PC-3 (cell line): ENCODE measurements at regions of chr3 and their contacts with region 1.

Region 1: GRCh38 chr3:99023590-99024192 is 122.2 kb upstream of the DCBLD2 start:
- DNase-seq: peak; percentile 73
- ATAC-seq: no peak; the same call in 1 of the 2 replicates
- H3K4me3 ChIP-seq: no peak overlapping the region
- H3K27ac ChIP-seq: no peak overlapping the region
- H3K4me1 ChIP-seq: no peaks in the 10 kb centered on the region
- H3K27me3 ChIP-seq: no peaks in the 10 kb centered on the region
- CTCF ChIP-seq: peak; percentile 91

Region 2: DNA sequence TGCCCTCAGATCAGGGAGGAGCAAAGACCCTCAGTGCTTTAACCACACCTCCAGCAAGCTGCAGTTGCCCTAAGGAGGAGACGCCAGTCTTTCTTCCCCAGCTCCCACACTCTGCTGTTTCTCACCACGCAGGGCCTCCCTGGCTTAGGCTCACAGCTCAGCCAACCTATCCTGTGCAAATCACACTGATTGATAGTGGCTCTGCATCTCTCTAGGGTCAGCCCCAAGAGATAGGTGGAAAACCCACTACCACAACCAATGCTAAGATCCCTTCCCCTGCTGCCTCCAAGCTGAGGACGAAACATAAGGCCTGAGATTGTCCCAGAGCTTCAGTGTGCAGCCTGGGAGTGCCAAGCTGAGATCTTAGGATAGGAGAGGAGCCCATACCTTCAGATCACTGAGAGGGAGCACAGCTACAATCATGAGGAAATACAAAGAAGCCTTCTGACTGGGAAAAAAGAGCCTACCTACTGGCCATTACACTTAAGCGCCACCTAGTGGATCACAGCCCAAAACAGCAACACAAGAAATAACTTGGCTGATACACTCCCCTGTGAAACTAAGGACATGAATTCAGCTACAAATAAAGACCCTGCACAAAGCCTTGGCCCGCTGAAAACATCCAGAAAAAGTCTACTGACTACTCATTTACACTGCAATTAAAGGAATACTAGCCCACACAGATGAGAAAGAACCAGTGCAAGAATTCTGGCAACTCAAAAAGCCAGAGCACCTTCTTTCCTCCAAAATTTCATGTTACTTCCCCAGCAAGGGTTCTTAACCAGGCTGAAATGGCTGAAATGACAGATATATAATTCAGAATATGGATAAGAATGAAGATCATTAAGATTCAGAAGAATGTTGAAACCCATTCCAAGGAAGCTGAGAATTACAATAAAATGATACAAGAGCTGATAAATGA is 149.3 kb after region 1 on chr3:
- CTCF ChIA-PET with region 1: interaction called, 22 read pairs
- POLR2A ChIA-PET with region 1: interaction called, 3 read pairs
- intact Hi-C with region 1: loop called (anchors 1 kb)
- DNase-seq: peak; percentile 84
- ATAC-seq: peak; percentile 79
- H3K4me3 ChIP-seq: no peak overlapping the region
- H3K27ac ChIP-seq: no peak overlapping the region
- H3K4me1 ChIP-seq: no peaks in the 10 kb centered on the region
- H3K27me3 ChIP-seq: no peaks in the 10 kb centered on the region
- CTCF ChIP-seq: peak; percentile 94

Region 3: DNA sequence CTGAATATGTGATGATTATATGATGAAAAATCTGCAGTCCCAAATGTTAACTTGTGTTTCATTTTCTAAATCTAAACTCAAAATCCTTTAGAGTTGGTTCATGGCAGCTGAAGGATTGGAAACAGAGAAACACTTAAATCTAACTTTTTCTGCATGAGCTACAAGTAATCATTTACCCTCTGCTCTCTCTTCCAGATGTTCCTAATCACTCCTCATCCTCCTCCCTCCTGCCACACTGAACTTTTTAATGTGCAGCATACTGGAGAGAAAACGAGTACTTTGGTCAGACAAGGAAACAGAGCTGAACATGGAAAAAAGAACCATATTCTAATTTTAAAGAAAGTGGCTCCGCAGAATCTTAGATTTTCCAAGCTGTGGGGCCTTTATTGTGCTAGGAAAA is 293.5 kb after region 1 on chr3:
- CTCF ChIA-PET with region 1: interaction called, 10 read pairs
- POLR2A ChIA-PET with region 1: no interaction called
- intact Hi-C with region 1: no loop called
- DNase-seq: no peak
- ATAC-seq: no peak
- H3K4me3 ChIP-seq: no peak overlapping the region
- H3K27ac ChIP-seq: no peak overlapping the region
- H3K4me1 ChIP-seq: peaks cover 13% of the 10 kb centered on the region; the same call in 1 of the 2 replicates
- H3K27me3 ChIP-seq: no peaks in the 10 kb centered on the region
- CTCF ChIP-seq: no peak

Region 4: GRCh38 chr3:99499235-99500158 is 475.8 kb after region 1 on chr3:
- CTCF ChIA-PET with region 1: interaction called, 3 read pairs
- POLR2A ChIA-PET with region 1: no interaction called
- intact Hi-C with region 1: loop called (anchors 10 kb)
- DNase-seq: peak; percentile 77
- ATAC-seq: peak; percentile 81
- H3K4me3 ChIP-seq: no peak overlapping the region
- H3K27ac ChIP-seq: no peak overlapping the region
- H3K4me1 ChIP-seq: peaks cover 18% of the 10 kb centered on the region
- H3K27me3 ChIP-seq: no peaks in the 10 kb centered on the region
- CTCF ChIP-seq: peak; percentile 94

Region 5: DNA sequence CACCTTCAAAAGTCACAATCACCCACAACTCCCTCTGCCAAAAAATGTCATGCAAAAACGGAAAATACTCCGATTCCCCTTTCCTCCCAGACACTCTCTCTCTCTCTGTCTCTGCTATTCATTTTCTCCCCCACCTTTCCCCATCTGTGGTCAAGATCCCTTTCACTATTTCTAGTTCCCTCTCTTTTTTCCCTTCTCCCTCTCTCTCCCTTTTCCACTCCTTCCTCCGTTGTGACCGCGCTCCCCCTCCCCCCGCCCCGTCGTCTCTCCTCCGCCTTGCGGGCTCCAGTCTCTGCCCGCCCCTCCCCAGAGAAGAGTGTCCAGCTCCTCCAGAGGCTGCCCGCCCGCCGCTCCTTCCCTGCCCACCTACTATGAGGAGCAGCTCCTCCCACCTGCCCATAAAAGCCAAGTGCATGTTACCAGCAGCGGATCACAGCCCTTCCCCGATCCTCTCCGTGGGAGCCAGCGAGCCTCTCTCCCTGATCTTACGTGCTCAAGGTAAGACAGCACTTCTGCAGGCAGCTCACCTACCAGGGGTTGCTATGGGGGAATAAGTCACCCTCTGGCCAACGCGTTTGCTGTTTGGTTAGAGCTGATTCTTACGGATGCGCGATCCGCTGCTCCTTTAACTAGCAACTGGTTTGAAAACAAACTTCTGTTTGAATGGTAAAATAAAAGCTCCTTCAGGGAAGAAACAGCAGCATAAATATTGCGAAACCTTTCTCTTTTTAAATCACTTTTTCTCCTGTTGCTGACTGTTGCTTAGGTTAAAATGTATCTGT is 614.7 kb after region 1 on chr3 and contains the start of gene COL8A1:
- CTCF ChIA-PET with region 1: interaction called, 12 read pairs
- POLR2A ChIA-PET with region 1: no interaction called
- intact Hi-C with region 1: no loop called
- DNase-seq: peak; percentile 76
- ATAC-seq: peak; percentile 63
- H3K4me3 ChIP-seq: peak within 1 kb of the TSS; percentile 72
- H3K27ac ChIP-seq: peak within 1 kb of the TSS; percentile 79
- H3K4me1 ChIP-seq: peaks cover 36% of the 10 kb centered on the region
- H3K27me3 ChIP-seq: no peaks in the 10 kb centered on the region
- CTCF ChIP-seq: no peak
- total RNA-seq, gene COL8A1: 2.4 and 3.8 TPM in 2 replicates

Region 6: GRCh38 chr3:99761415-99762165 is 737.9 kb after region 1 on chr3:
- CTCF ChIA-PET with region 1: interaction called, 10 read pairs
- POLR2A ChIA-PET with region 1: no interaction called
- intact Hi-C with region 1: no loop called
- DNase-seq: no peak
- ATAC-seq: no peak
- H3K4me3 ChIP-seq: no peak overlapping the region
- H3K27ac ChIP-seq: no peak overlapping the region
- H3K4me1 ChIP-seq: no peaks in the 10 kb centered on the region
- H3K27me3 ChIP-seq: no peaks in the 10 kb centered on the region
- CTCF ChIP-seq: no peak